ENCODE measurements at regions of chr11 and their contacts with region 1.

Region 1: GRCh38 chr11:81644239-81644840 is 1089.3 kb downstream of the FAM181B start:
- DNase-seq: peak in 4 of 5 donors; percentile 26 to 70 (median 48)
- H3K4me3 ChIP-seq: no peak overlapping the region
- H3K27ac ChIP-seq: no peak overlapping the region
- H3K4me1 ChIP-seq: no peaks in the 10 kb centered on the region
- H3K27me3 ChIP-seq: no peaks in the 10 kb centered on the region
- CTCF ChIP-seq: peak; percentile 58

Region 2: DNA sequence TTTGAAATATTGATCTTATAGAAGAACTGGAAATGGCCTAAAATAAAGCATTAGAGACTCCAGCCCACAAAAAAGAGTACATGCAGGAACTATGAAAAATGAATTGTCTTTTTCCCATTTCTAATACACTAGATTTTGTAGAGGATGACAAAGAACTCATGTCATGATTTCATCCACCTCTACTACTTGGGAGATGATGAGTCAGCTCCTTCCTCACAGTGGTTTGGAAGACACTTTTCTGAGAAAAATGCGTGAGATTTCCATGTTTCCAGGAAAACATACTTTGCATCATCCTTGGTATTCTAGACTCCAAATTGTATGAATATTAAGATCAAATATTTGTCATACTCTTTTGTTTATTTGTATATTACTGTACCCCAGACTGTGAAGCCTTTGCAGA is 588.9 kb after region 1 on chr11:
- intact Hi-C with region 1: loop called (anchors 5 kb)
- DNase-seq: no peak
- H3K4me3 ChIP-seq: no peak overlapping the region
- H3K27ac ChIP-seq: no peak overlapping the region
- H3K4me1 ChIP-seq: no peaks in the 10 kb centered on the region
- H3K27me3 ChIP-seq: no peaks in the 10 kb centered on the region
- CTCF ChIP-seq: no peak

Measured in kidney (tissue), 22 donors.